Tibial artery (tissue), 4 donors: ENCODE measurements at regions of chr2 and their contacts with region 1.

Region 1: DNA sequence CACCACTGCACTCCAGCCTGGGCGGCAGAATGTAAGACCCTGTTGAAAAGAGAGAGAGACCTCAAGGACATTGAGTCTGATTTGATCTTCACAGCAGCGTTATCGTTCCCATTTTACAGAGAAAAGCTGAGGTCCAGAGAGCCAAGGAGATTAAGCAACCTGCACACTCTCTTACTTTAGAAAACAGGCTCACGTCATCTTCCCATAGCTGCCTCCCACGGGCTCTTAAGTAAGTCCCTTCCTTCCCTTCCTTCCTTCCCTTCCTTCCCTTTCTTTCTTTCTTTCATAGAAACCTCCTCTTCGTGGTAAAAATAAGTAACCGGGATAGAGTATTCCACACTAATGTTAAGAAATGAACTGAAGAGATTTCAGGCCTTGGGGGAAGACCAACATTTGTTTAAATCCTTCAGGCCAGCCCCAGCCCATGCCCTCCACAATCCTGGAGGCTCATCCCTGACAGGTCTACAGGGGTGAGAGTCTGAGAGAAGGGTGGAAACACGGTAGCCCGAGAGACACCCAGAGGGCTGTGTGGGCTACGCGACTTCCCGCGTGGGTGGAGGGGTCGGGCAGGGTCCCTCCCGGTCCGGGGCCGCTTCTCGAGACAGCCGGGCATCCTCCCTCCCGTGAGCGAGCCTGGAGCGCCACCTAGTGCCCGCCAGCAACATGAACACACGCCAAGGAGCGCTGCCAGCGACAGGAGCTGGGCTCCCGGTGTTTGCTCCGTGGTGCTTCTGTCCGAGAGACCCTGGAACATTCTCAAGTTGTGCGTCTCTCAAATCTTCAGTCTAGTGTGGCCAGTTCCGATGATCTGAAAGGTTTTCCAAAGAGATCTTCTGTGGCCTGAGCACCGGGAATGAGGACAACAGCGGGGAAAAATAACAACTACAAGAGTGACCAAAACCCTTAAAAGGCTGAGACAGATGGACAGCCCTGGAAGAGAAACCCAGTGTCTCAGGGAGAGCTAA is 160.3 kb downstream of the INO80D start:
- DNase-seq: peak; percentile 55 to 80
- H3K4me3 ChIP-seq: peak overlapping the region in 1 of 2 donors; percentile 25
- H3K27ac ChIP-seq: no peak overlapping the region
- H3K4me1 ChIP-seq: peaks cover 0 to 9% (median 3%) of the 10 kb centered on the region in 4 donors
- H3K27me3 ChIP-seq: peaks cover 0 to 30% of the 10 kb centered on the region in 2 donors
- CTCF ChIP-seq: peak; percentile 85 to 91

Region 2: DNA sequence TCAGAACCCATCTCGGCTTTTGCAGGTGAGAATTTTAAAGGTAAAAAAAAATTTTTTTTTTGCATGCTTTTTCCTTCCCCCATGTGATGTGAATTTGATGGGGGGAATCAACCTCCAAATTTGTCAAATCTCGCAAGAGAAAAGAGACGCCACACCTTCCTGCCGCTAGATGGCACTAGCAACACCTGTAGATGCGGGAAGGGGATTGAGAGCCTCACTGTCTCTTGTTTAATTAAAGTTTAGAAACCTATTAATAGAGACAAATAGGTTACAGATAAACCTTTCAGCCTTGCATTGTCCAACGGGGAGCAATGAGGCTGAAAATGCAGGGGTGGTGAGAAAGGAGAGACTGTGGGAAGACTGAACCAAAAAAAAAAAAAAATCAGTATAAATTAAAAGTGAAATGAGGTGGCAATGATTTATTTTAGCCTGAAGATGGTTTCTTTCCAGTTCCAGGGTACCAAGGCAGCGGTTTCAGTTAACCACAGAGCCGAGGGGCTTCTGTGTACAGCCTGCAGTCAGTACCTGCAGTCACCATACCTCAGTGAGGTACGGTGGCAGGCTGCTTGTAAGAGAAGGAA is 158.8 kb before region 1 on chr2:
- intact Hi-C with region 1: loop called (anchors 10 kb)
- DNase-seq: peak in 1 of 2 donors; percentile 58
- H3K4me3 ChIP-seq: no peak overlapping the region
- H3K27ac ChIP-seq: no peak overlapping the region
- H3K4me1 ChIP-seq: peaks cover 0 to 15% (median 8%) of the 10 kb centered on the region in 4 donors
- H3K27me3 ChIP-seq: peaks cover 0 to 4% of the 10 kb centered on the region in 2 donors
- CTCF ChIP-seq: peak; percentile 79